ENCODE measurements at regions of chr18 and their contacts with region 1.

Region 1: DNA sequence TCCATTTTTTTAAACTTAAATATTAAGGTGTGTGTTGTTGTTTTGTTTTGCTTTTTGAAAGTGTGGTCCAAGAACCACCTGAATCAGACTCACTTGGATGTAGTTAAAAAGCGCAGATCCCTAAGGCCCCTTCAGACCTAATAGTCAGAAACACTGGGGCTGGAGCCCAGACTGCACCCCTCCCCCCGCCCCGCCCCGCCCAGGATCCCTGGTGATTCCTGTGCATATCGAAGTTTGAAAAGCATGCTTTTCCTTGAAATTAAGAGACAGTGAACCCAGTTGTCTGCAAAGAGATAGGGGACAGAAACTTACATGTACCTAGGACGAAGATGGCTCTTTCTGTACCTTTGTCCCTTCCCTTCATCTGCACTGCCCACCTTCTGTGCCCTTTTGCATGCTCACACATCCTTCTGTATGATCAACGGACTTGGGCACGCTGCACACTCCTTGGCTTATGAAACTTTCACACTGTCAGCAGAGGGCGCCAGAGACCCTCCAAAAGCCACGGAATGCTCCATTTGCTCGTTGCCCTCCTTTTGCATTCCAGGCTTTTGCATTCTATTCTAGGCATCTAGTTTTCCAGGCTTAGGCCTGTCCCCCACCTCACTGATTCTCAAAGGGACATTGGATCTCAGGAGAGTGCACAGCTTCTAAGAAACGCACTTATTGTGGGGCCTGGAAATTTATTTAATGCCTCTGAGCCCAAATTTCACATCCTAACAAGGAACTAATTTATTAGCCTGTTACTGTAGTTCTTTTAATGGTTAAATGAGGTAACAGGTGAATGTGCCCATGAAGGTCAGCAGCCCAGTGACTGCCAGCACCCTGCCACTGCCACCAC is 32.8 kb upstream of the SLC14A1 start:
- DNase-seq: peak; percentile 92
- H3K4me3 Mint-ChIP-seq: no peak overlapping the region
- H3K27ac Mint-ChIP-seq: no peak overlapping the region
- H3K4me1 Mint-ChIP-seq: peaks cover 35% of the 10 kb centered on the region
- H3K27me3 Mint-ChIP-seq: peaks cover 49% of the 10 kb centered on the region

Region 2: DNA sequence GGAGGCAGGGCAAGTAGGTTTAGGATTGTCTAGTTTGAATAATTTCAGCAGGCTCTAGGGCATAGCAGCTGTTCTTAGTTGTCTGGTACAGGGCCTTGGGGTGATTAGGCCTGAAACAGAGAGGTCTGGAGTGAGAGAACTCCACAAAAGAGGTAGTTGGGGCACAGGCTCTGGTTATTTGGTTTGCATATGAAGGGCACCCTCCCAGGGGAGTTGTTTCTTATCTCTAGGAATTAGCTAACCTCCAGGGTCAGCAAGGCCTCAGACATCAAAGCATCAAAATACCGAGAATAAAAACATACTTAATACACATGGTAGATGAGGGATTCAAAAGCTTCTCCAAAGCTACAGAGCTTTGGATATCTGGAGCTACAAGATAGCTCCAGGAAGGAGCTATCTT is 114.3 kb before region 1 on chr18:
- intact Hi-C with region 1: no loop called
- DNase-seq: no peak
- H3K4me3 Mint-ChIP-seq: no peak overlapping the region
- H3K27ac Mint-ChIP-seq: no peak overlapping the region
- H3K4me1 Mint-ChIP-seq: no peaks in the 10 kb centered on the region
- H3K27me3 Mint-ChIP-seq: no peaks in the 10 kb centered on the region

Region 3: GRCh38 chr18:45670281-45670962 is 20.8 kb before region 1 on chr18:
- intact Hi-C with region 1: loop called (anchors 1 kb)
- DNase-seq: peak; percentile 79
- H3K4me3 Mint-ChIP-seq: peak overlapping the region; percentile 53
- H3K27ac Mint-ChIP-seq: peak overlapping the region; percentile 70
- H3K4me1 Mint-ChIP-seq: peaks cover 50% of the 10 kb centered on the region
- H3K27me3 Mint-ChIP-seq: peaks cover 26% of the 10 kb centered on the region

Region 4: GRCh38 chr18:45793306-45793965 is 102.2 kb after region 1 on chr18:
- intact Hi-C with region 1: no loop called
- DNase-seq: no peak
- H3K4me3 Mint-ChIP-seq: no peak overlapping the region
- H3K27ac Mint-ChIP-seq: no peak overlapping the region
- H3K4me1 Mint-ChIP-seq: no peaks in the 10 kb centered on the region
- H3K27me3 Mint-ChIP-seq: peaks cover 11% of the 10 kb centered on the region

Region 5: GRCh38 chr18:45839414-45840395 is 148.5 kb after region 1 on chr18:
- intact Hi-C with region 1: loop called (anchors 1 kb)
- DNase-seq: peak; percentile 69
- H3K4me3 Mint-ChIP-seq: no peak overlapping the region
- H3K27ac Mint-ChIP-seq: no peak overlapping the region
- H3K4me1 Mint-ChIP-seq: peaks cover 5% of the 10 kb centered on the region
- H3K27me3 Mint-ChIP-seq: peaks cover 57% of the 10 kb centered on the region

Region 6: GRCh38 chr18:45879681-45880655 is 188.8 kb after region 1 on chr18:
- intact Hi-C with region 1: loop called (anchors 1 kb)
- DNase-seq: peak; percentile 92
- H3K4me3 Mint-ChIP-seq: no peak overlapping the region
- H3K27ac Mint-ChIP-seq: no peak overlapping the region
- H3K4me1 Mint-ChIP-seq: peaks cover 10% of the 10 kb centered on the region
- H3K27me3 Mint-ChIP-seq: no peaks in the 10 kb centered on the region

Region 7: DNA sequence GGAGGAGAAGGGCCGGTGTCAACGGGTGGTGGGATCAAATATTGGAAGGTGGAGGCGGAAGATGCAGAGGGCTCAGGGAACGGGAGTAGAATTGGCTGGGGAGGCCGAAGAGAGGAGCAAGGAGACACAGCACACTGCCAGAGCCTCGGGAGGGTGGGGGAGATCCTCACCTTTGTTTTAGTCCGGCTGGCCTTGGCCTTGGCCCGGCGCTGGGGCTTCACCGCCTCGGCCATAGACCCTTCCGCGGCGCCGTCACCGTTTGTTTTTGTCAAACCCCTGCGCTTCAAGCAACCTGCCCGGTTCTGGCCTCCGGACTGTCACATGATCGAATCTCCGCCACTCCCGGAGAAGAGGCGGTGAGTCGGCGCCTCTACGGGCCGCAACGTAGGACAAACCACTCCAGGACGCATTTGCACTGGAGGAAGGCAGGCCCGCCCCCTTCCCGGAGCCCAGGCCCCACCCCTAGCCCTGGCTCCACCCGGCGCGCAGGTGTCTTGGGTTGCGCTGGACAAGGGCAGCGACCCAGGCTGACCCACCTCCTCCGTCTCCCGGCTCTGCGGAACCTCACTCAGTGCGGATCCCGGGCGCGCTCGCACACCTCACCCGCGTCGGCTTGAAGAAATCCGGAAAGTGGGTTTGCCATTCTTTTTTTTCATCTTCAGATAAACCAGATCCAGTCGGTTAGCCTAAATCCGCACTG is 276.0 kb after region 1 on chr18 and contains the start of gene EPG5:
- intact Hi-C with region 1: loop called (anchors 2 kb)
- DNase-seq: peak; percentile 98
- H3K4me3 Mint-ChIP-seq: peak within 1 kb of the TSS; percentile 99
- H3K27ac Mint-ChIP-seq: peak within 1 kb of the TSS; percentile 94
- H3K4me1 Mint-ChIP-seq: peaks cover 26% of the 10 kb centered on the region
- H3K27me3 Mint-ChIP-seq: peaks cover 3% of the 10 kb centered on the region
- total RNA-seq, gene EPG5: 14.9 and 15.5 TPM in 2 replicates

Measured in activated CD4-positive, alpha-beta T cell treated with anti-CD3 and anti-CD28 coated beads, Interleukin-2, amount 10 ng/mL, durations not matched to agents 24 days and 14 days (primary cell).